Common myeloid progenitor, CD34-positive (primary cell): ENCODE measurements at regions of chr5 and their contacts with region 1.

Region 1: DNA sequence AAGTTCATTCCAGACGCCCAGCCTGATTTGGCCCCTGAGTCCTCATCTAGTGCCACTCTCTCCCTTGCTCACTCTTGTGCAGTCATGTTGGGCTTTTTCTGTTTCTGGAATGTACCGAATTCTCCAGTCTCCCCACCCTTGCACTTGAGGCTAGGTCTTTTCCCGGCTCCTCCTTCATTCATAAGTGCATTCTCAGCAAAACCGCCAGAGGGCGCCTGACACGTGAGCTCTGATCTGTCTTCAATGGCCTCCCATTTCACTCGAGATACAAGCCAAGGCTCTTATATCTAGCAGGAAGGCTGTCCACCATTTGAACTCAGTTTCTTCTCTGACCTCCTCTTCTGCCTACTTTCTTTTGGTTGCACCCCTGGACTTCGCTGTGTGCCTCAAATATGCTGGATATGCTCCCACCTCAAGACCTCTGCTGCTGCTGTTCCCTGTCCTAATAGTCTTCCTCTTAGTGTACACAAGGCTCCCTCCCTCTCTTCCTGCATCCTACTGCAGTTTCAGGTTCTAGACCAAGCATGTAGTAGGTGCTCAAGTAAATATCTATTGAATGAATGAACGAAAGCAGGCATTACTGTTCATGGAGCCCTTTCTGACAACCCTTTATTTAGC is 568.1 kb upstream of the WWC1 start:
- DNase-seq: peak; percentile 71 to 83 (median 80)
- H3K4me3 ChIP-seq: no peak overlapping the region
- H3K27ac ChIP-seq: no peak overlapping the region
- H3K4me1 ChIP-seq: peaks cover 0 to 3% (median 0%) of the 10 kb centered on the region in 4 experiments
- H3K27me3 ChIP-seq: peaks cover 0 to 2% (median 0%) of the 10 kb centered on the region in 5 experiments

Region 2: DNA sequence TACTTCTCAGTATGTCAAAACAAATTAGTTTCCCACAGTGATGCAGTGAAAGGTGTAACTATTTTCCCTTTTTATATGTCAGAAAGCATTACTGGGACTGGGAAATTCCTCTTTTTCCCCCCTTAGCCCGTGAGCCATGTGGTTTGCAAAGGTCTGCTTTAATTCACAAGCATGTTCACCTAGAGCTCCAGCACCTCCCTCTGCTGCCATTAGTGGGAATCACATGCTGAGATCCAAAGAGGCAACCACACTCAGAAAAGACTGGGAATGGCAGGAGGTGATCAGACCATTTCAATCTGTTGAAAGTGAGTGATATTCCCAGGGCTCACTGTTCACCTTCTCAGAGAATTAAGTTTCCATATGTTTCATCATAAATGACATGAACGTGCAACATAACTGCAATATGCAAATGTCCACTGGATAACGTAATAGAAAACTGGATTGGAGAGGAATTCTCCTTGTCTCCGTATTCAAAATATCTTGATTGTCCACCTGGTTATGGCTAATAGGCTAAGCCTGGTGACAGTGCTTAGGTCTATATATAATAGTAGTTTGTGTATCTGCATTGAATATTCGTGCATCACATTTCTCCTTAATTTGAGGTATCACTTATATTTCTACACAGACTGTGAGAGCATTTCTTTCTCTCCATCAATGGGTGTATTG is 135.5 kb before region 1 on chr5:
- CTCF ChIA-PET with region 1: no interaction called
- POLR2A ChIA-PET with region 1: no interaction called
- DNase-seq: no peak
- H3K4me3 ChIP-seq: no peak overlapping the region
- H3K27ac ChIP-seq: no peak overlapping the region
- H3K4me1 ChIP-seq: no peaks in the 10 kb centered on the region
- H3K27me3 ChIP-seq: peaks cover 0 to 2% (median 0%) of the 10 kb centered on the region in 5 experiments

Region 3: DNA sequence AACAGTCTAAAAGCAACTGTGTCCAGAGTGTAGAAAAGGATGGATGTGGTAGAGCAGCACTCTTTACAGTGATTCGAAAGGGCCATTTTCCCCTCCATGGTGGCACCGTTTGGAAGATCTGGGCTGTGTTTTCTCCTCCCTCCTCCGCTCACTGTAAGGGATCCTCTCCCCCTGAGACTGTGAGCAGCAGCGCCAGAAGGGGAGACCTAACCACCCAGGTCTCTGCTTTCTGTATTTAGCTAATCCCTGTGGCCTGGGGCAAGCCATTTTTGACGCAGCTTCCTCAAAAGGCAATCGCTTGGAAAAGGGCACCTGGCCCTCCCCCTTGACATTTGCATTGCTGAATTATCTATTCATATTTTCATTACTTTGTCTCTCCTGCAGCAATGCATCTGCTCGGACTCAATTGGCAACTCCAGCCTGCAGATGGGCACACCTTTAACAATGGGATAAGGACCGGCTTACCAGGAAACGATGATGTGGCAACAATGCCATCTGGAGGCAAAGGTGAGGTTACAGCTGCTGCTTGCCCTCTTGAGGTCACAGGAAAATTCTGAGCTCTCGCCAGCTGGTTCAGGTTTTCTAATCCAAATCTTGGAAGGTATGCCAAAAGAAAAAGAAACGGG is 323.8 kb after region 1 on chr5:
- CTCF ChIA-PET with region 1: interaction called, 21 read pairs
- POLR2A ChIA-PET with region 1: no interaction called
- DNase-seq: peak; percentile 47 to 72 (median 72)
- H3K4me3 ChIP-seq: no peak overlapping the region
- H3K27ac ChIP-seq: no peak overlapping the region
- H3K4me1 ChIP-seq: peaks cover 0 to 8% (median 2%) of the 10 kb centered on the region in 4 experiments
- H3K27me3 ChIP-seq: no peaks in the 10 kb centered on the region

Region 4: DNA sequence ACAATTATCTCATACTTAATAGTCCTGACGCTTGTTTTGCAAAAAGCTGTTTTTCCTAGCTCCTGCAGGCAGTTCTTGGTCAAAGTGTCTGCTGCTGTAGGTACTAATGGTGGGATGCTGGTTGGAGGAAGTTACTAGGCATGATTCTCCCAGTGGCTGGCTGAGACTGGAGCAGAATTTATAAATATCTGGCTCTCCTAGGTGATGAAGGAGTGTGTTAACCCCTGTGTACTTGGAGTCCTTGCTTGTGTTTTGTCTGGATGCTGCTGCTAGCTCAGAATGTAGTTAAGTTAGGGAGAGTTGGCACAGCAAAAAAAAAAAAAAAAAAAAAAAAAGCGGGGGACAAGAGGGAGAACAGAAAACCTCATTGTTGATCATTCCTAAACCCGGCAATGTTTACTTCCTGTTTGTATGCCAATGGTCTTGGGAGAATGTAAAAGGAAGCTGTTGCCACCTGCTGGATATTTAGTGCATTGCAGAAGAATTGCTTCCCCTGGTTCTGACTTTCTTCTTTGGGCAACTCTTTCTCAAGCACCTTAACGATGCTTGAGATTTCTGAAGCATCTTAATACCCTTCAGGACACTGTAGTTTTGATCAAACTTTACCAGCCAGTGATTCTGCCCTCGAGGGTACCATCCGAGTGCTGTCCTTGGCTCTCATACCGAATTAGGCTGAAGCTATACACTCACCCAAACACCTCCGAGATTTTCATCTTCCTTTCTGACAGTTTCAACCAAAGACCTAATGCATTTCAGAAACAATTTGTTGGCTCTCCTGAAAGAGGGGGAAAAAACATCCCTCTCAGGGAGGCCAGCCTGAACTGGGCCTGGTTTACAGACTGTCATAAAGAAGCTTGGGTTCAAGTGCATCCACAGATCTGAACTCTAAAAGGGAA is 496.4 kb after region 1 on chr5:
- CTCF ChIA-PET with region 1: interaction called, 18 read pairs
- POLR2A ChIA-PET with region 1: interaction called, 4 read pairs
- DNase-seq: peak; percentile 68 to 78 (median 70)
- H3K4me3 ChIP-seq: peak overlapping the region in 1 of 7 experiments; percentile 49
- H3K27ac ChIP-seq: no peak overlapping the region
- H3K4me1 ChIP-seq: peaks cover 0 to 7% (median 1%) of the 10 kb centered on the region in 4 experiments
- H3K27me3 ChIP-seq: peaks cover 0 to 8% (median 0%) of the 10 kb centered on the region in 5 experiments